ENCODE measurements at regions of chr7 and their contacts with region 1.

Region 1: GRCh38 chr7:21427182-21427870 is 557 bp upstream of the SP4 start:
- DNase-seq: peak; percentile 88
- ATAC-seq: peak; percentile 93
- H3K4me3 ChIP-seq: peak overlapping the region; percentile 90 to 92
- H3K27ac ChIP-seq: peak overlapping the region; percentile 93
- H3K4me1 ChIP-seq: peaks cover 7% of the 10 kb centered on the region; the same call in 1 of the 2 replicates
- H3K27me3 ChIP-seq: no peaks in the 10 kb centered on the region
- CTCF ChIP-seq: no peak

Region 2: GRCh38 chr7:20778063-20778721 is 649.1 kb before region 1 on chr7:
- CTCF ChIA-PET with region 1: interaction called, 12 read pairs
- POLR2A ChIA-PET with region 1: no interaction called
- in situ Hi-C with region 1: no loop called
- intact Hi-C with region 1: no loop called
- DNase-seq: no peak
- ATAC-seq: peak; percentile 99
- H3K4me3 ChIP-seq: peak overlapping the region; percentile 14 to 36; a peak in 3 of 4 replicates
- H3K27ac ChIP-seq: no peak overlapping the region
- H3K4me1 ChIP-seq: 0 out of 2 replicates have a peak, but pooled peaks cover 3% of the 10 kb centered on the region
- H3K27me3 ChIP-seq: peaks cover 42% of the 10 kb centered on the region
- CTCF ChIP-seq: peak; percentile 97

Region 3: DNA sequence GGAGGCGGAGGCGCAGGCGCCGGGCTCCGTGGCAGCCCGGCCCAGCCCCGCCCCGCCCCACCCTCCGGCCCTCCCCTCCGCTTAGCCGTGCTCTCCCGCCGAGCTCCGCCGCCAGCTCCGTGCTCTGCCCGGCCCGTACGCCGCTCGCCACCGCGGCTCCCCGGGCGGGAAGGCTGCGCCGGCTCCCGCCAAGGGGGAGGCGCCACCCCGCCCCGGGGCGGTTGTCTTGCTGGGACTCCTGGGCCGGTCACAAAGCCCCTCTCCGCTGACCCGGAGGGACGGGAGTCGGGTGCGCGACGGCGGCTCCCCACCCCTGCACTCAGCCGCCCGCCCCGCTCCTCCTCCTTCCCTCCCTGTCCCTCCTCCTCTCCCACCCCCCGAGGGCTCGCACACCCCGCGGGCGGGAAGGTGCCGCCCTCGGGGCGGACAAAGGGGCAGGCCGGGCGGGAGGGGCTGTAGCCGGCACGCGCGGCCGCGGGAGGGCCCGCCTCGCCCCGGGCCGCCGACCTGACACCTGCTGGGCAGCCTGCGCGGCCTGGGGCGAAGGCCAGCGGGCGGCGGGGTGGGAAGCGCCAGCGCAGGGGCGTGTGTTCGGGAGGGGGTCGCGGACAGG is 629.1 kb before region 1 on chr7:
- CTCF ChIA-PET with region 1: no interaction called
- POLR2A ChIA-PET with region 1: no interaction called
- in situ Hi-C with region 1: no loop called
- intact Hi-C with region 1: loop called (anchors 10 kb)
- DNase-seq: no peak
- ATAC-seq: peak; percentile 96
- H3K4me3 ChIP-seq: peak overlapping the region; percentile 48 to 80
- H3K27ac ChIP-seq: no peak overlapping the region
- H3K4me1 ChIP-seq: no peaks in the 10 kb centered on the region; the same call in 1 of the 2 replicates
- H3K27me3 ChIP-seq: peaks cover 36% of the 10 kb centered on the region
- CTCF ChIP-seq: no peak

Region 4: GRCh38 chr7:21175714-21176113 is 251.6 kb before region 1 on chr7:
- CTCF ChIA-PET with region 1: no interaction called
- POLR2A ChIA-PET with region 1: no interaction called
- in situ Hi-C with region 1: no loop called
- intact Hi-C with region 1: no loop called
- DNase-seq: no peak
- ATAC-seq: no peak
- H3K4me3 ChIP-seq: no peak overlapping the region
- H3K27ac ChIP-seq: no peak overlapping the region
- H3K4me1 ChIP-seq: no peaks in the 10 kb centered on the region
- H3K27me3 ChIP-seq: no peaks in the 10 kb centered on the region
- CTCF ChIP-seq: no peak

Region 5: GRCh38 chr7:21281183-21281582 is 146.1 kb before region 1 on chr7:
- CTCF ChIA-PET with region 1: no interaction called
- POLR2A ChIA-PET with region 1: interaction called, 12 read pairs
- in situ Hi-C with region 1: no loop called
- intact Hi-C with region 1: no loop called
- DNase-seq: no peak
- ATAC-seq: no peak
- H3K4me3 ChIP-seq: no peak overlapping the region
- H3K27ac ChIP-seq: no peak overlapping the region
- H3K4me1 ChIP-seq: no peaks in the 10 kb centered on the region
- H3K27me3 ChIP-seq: no peaks in the 10 kb centered on the region
- CTCF ChIP-seq: no peak

Region 6: GRCh38 chr7:21412410-21412851 is 14.9 kb before region 1 on chr7:
- CTCF ChIA-PET with region 1: no interaction called
- POLR2A ChIA-PET with region 1: interaction called, 11 read pairs
- in situ Hi-C with region 1: no loop called
- intact Hi-C with region 1: no loop called
- DNase-seq: no peak
- ATAC-seq: no peak
- H3K4me3 ChIP-seq: no peak overlapping the region
- H3K27ac ChIP-seq: no peak overlapping the region
- H3K4me1 ChIP-seq: no peaks in the 10 kb centered on the region
- H3K27me3 ChIP-seq: no peaks in the 10 kb centered on the region
- CTCF ChIP-seq: no peak

Region 7: DNA sequence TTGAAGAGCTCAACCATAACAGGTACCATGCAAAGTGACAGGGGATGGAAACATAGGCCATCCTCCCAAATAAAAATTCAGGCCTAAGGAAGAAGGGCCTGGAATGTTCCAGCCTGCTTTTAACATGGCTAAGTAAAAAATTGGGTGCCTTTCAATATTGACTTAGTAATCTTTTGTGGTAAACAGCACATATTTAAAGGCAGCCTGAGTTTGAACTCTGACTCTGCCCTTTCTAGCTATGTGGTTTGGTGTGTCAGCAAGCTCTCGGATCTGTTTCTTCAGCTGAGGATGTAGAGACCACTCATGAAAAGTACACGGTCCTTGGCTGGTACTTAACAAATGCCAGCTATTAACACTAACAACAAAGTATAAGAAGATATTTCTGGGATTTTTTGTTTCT is 710.1 kb after region 1 on chr7:
- CTCF ChIA-PET with region 1: no interaction called
- POLR2A ChIA-PET with region 1: interaction called, 16 read pairs
- in situ Hi-C with region 1: no loop called
- intact Hi-C with region 1: no loop called
- DNase-seq: no peak
- ATAC-seq: no peak
- H3K4me3 ChIP-seq: no peak overlapping the region
- H3K27ac ChIP-seq: no peak overlapping the region
- H3K4me1 ChIP-seq: no peaks in the 10 kb centered on the region
- H3K27me3 ChIP-seq: peaks cover 2% of the 10 kb centered on the region; the same call in 1 of the 2 replicates
- CTCF ChIP-seq: no peak

Measured in Panc1 (cell line).